Posterior cingulate gyrus (tissue), 11 donors: ENCODE measurements at regions of chr12 and their contacts with region 1.

Region 1: GRCh38 chr12:59087077-59087673 is 166.9 kb upstream of the LRIG3 start:
- DNase-seq: no peak

Region 2: GRCh38 chr12:58346032-58346632 is 741.0 kb before region 1 on chr12:
- intact Hi-C with region 1: loop called (anchors 5 kb)
- DNase-seq: no peak

Region 3: DNA sequence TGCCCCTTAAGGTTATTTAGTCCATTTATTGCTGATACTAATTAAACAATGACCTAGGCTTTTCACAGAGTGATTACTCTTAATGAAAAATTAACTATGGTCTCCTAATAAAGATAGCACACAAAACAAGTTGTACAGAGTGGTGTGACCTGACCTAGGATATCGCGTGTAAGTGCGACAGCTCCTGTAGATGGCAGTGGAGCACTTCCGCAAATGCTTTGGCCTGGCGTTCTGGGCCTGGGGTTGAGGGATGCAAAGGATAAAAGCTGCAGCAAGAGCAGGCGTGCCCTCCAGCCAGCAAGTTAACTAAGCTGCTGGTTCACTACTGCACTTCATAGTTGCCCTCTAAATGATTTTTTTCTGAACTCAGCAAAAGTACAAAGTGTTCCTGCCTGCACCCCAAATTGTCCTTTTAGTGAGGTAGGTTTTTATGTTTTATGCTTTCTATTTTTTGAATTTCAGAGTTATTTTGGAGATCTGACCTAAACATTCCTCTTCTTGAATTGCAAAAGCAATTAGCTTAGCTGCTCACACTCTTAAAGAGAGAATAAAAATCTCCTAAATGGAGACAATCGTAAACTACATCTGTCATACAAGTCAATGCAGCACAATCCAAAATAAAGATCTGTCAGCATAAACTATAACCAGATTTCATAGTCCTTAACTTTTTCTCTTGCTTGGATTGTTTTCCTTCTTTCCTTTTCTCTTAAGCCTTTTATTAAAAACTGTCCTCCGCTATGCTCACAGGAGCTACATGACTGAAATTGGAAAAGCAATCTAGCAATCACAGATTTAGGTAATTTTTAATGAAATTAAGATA is 546.5 kb before region 1 on chr12:
- intact Hi-C with region 1: loop called (anchors 2 kb)
- DNase-seq: peak; percentile 48 to 96 (median 72)

Region 4: DNA sequence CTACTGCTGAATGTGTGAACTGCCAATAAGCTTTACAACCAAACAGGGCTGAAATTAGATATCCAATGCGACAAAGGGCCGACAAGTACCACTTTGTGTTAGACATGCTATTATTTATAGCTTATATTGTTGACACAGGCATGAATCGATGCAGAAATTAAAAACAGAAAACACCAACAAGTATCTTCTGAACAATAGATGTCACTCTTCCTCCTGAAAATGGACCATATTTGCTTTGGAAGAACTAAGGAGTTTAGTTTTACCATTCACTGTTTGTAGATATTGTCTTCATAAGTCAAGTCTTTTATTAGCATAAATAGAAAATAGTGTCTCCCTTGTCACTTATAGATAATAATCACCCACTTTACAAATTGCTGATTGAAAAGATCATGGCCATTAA is 253.3 kb before region 1 on chr12:
- intact Hi-C with region 1: loop called (anchors 5 kb)
- DNase-seq: no peak